Sciatic nerve (tissue), 2 donors: ENCODE measurements at regions of chr11 and their contacts with region 1.

Region 1: DNA sequence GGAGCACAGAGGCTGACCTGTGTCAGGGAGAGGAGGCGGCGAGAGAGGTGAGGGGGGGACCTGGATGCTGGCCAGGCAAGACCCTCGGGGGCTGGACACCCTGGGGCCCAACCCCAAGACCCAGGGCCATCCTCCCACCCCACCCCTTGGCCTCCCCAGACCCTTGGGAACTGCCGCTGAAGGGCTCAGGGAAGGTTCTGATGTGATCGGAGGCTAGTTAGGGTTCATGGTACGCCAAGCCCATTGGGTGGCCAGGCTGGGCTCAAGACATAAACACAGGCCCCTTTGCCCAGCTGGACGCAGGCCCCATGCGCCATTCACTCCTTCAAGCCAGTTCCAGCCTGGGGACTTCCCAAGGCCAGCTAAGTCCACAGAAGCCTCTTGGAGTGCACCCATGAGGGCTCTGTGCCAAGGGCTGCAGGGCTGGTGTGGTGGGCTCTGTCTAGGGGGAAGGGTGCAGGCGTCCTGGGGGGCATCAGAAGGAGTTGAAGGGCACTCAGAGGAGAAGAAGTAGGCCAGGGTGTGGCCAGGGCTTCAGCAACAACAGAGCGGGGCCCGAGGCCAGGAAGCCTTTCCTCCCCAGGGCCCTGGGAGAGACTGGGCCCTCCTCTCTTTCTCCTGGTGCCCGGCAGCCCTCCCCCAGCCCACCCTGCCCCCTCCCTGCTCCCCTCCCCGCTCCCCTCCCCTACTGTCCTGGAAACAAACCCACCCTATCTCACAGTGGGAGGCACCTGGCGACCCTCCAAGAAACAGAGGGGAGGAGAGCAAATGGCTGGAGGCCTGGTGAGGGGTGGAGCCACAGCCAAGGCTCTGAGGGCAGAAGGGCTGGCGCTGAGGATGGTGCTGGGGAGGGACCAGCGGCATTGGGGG is 12.9 kb downstream of the TSPAN32 start:
- DNase-seq: peak; percentile 96
- ATAC-seq: peak; percentile 88

Region 2: DNA sequence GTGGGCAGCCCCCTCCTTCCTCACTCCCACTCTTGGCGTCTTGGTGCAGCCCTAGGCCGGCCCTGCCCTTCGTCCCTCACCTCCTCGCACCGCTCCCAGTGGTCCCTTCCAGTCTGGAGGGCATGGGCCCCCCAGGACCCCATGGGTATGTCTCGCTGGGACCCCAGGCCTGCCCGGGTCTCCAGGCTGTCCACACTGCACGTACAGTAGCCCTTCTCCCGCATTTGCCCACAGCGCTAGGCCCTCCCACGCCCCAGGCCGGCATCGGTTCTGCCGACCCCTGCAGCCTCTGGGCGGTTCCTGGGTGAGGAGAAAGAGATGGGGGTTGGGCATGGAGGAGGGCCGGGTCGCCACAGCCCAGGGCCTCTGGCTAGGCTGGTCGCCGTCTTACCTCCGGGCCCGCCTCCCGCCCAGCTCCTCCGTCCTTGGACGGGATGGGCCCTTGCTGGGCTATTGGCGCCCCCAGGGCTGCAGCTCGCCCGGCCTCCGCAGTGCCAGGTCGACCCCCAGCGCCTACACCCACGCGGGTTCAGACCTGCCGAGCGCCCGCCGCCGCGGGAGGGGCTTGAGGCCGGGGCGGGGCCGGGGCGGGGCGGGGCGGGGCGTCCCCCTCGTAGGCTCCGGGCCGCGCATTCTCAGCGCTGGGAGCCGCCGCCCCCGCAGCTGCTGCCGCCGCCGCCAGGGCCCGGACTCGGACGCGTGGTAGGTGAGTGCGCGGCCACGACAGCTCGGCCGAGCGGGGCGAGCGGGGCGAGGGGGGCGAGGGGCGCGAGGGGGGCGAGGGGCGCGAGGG is 1482.2 kb before region 1 on chr11 and contains the start of gene CD151:
- intact Hi-C with region 1: loop called (anchors 10 kb)
- DNase-seq: no peak
- ATAC-seq: peak; percentile 6
- total RNA-seq, gene CD151: 263 TPM

Region 3: DNA sequence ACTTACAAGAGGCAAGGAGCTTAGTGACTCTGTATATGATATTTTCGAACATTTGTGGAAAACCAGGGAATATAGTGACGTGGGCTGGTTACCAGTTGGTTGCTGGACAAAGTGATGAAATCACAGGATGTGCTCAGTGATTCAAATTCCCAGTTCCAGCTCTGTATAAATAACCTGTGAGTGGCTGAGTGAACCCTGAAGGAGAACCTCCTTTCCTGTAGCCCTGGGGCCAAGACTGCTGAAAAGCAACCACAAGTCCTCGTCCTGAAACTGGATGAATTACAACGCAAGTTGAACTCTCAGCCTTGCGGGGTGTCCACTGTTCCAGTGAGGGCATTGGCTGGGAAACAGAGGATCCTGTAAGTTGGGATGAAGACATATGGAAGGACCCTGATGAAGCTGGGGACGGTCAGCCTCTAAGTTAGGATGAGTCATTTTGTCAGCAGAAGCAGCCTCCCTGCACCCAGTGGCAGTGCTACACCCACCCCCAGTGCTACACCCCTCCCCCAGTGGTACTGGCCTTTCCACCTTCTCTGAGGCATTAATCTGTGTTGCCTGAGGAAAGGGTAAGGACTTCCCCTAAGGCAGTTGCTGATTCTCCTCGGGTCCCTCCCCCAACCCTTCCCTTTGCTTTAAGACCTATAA is 40.4 kb after region 1 on chr11:
- intact Hi-C with region 1: no loop called
- DNase-seq: no peak
- ATAC-seq: no peak